CD8-positive, alpha-beta memory T cell (primary cell): ENCODE measurements at regions of chr12 and their contacts with region 1.

Region 1: DNA sequence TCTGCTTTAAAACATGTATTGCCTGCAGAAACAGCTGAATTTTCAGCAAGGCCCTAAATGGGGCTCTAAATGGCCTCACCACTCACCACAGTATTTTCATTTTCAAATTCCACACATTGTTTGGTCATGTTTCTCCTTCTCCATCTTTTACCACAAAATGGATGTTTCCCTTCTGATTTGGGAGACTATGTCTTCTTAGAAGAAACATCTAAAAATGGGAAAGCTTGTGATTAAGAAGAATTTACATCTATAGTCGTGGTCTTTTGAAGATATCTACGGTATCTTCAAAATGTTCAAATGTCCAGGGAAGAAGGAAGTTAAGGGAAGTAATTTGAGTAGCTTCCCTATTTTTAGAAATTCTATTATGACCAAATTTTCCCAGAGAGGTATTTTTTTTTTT is 20.7 kb upstream of the TUBA1C start:
- DNase-seq: no peak
- H3K4me3 ChIP-seq: no peak overlapping the region
- H3K4me3 Mint-ChIP-seq: no peak overlapping the region
- H3K27ac ChIP-seq: peak overlapping the region; percentile 38
- H3K27ac Mint-ChIP-seq: no peak overlapping the region
- H3K4me1 ChIP-seq: no peaks in the 10 kb centered on the region
- H3K4me1 Mint-ChIP-seq: no peaks in the 10 kb centered on the region
- H3K27me3 ChIP-seq: no peaks in the 10 kb centered on the region
- H3K27me3 Mint-ChIP-seq: peaks cover 0 to 5% of the 10 kb centered on the region in 2 donors

Region 2: DNA sequence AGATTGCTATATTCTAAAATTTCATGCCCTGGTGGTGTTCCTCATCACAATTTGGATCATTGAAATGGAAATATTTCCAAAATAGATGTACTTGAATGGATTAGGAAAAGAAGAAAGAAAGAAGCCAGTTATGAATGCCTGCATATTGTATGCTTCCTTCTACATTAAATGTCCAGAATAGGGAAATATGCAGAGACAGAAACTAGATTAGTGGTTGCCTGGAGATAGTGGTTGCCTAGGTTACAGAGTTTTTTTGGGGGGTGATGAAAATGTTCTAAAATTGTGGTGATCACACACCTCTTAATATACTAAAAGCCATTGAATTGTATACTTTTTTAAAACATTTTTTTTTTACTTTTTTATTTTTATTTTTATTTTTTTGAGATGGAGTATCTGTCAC is 73.3 kb before region 1 on chr12:
- CTCF ChIA-PET with region 1: no interaction called
- POLR2A ChIA-PET with region 1: no interaction called
- DNase-seq: no peak
- H3K4me3 ChIP-seq: no peak overlapping the region
- H3K4me3 Mint-ChIP-seq: no peak overlapping the region
- H3K27ac ChIP-seq: no peak overlapping the region
- H3K27ac Mint-ChIP-seq: no peak overlapping the region
- H3K4me1 ChIP-seq: no peaks in the 10 kb centered on the region
- H3K4me1 Mint-ChIP-seq: no peaks in the 10 kb centered on the region
- H3K27me3 ChIP-seq: no peaks in the 10 kb centered on the region
- H3K27me3 Mint-ChIP-seq: no peaks in the 10 kb centered on the region

Region 3: GRCh38 chr12:49232940-49233841 is 11.0 kb before region 1 on chr12:
- CTCF ChIA-PET with region 1: interaction called, 11 read pairs
- POLR2A ChIA-PET with region 1: no interaction called
- DNase-seq: no peak
- H3K4me3 ChIP-seq: no peak overlapping the region
- H3K4me3 Mint-ChIP-seq: peak overlapping the region; percentile 27 to 84 (median 63)
- H3K27ac ChIP-seq: peak overlapping the region; percentile 66
- H3K27ac Mint-ChIP-seq: peak overlapping the region in 3 of 8 donors; percentile 38 to 73 (median 72)
- H3K4me1 ChIP-seq: peaks cover 5% of the 10 kb centered on the region
- H3K4me1 Mint-ChIP-seq: peaks cover 0 to 10% (median 4%) of the 10 kb centered on the region in 3 donors
- H3K27me3 ChIP-seq: no peaks in the 10 kb centered on the region
- H3K27me3 Mint-ChIP-seq: peaks cover 0 to 1% of the 10 kb centered on the region in 2 donors